ENCODE measurements at regions of chr15 and their contacts with region 1.

Region 1: DNA sequence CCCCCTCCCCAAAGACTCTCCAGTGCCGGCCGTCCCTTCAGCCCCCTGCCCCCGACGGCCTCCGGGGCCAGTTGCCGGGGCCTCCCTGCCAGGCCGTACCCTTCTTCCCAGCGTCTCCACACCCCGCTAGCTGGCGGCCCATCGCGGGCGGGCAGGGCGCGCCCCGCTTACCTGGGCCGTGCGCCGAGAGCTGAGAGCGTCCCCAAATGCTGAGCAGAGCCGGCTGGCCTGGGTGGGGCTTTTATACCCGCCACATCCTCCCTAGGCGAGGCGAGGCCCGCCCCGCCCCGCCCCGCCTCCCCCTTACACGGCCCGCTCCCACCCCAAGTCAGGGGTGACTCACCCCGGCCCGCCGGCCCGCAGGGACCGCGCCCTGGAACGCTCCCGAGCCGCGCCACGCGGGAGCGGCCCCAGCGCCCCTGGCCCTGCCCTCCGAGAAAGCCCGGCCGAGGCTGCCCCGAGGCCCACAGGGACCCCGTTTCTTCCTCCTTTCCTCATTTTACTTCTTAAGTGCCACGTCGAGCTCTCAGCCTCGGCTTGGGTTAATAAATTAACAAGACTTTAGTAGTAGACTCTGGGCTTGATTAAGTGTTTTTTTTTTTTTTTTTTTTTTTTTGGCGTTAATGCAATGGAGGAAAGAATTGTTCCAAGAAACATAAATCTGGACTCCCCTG is at the start of gene ANXA2:
- DNase-seq: peak; percentile 80
- H3K4me3 ChIP-seq: peak within 1 kb of the TSS; percentile 82 to 99 (median 96)
- H3K27ac ChIP-seq: peak within 1 kb of the TSS; percentile 97
- H3K4me1 ChIP-seq: peaks cover 61% of the 10 kb centered on the region
- H3K27me3 ChIP-seq: no peaks in the 10 kb centered on the region
- CTCF ChIP-seq: no peak
- POLR2A ChIP-seq: peak; percentile 96
- total RNA-seq, gene ANXA2: 2,636 and 2,725 TPM in 2 replicates

Region 2: DNA sequence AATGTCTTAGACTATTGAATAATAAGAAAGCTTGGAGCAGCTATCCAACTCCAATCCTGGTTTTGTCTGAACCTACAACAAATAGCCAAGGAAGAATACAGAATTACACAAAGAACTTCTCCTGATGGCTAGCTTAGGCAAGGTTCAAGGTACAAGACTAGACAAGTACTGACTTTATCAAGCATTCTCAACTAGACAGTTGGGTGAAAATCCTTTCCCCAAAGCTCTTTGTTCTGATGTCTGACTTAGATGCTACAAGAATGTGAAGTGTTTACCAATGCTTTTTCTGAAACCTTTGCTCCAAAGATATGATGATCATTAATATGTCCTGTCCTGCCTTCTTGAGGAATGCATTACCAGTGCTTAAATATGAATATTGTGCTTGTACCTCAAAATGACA is 114.0 kb before region 1 on chr15:
- CTCF ChIA-PET with region 1: no interaction called
- POLR2A ChIA-PET with region 1: no interaction called
- dilution Hi-C with region 1: no loop called
- intact Hi-C with region 1: no loop called
- DNase-seq: no peak
- H3K4me3 ChIP-seq: no peak overlapping the region
- H3K27ac ChIP-seq: no peak overlapping the region
- H3K4me1 ChIP-seq: no peaks in the 10 kb centered on the region
- H3K27me3 ChIP-seq: peaks cover 7 to 8% of the 10 kb centered on the region in 2 experiments
- CTCF ChIP-seq: no peak
- POLR2A ChIP-seq: no peak

Region 3: DNA sequence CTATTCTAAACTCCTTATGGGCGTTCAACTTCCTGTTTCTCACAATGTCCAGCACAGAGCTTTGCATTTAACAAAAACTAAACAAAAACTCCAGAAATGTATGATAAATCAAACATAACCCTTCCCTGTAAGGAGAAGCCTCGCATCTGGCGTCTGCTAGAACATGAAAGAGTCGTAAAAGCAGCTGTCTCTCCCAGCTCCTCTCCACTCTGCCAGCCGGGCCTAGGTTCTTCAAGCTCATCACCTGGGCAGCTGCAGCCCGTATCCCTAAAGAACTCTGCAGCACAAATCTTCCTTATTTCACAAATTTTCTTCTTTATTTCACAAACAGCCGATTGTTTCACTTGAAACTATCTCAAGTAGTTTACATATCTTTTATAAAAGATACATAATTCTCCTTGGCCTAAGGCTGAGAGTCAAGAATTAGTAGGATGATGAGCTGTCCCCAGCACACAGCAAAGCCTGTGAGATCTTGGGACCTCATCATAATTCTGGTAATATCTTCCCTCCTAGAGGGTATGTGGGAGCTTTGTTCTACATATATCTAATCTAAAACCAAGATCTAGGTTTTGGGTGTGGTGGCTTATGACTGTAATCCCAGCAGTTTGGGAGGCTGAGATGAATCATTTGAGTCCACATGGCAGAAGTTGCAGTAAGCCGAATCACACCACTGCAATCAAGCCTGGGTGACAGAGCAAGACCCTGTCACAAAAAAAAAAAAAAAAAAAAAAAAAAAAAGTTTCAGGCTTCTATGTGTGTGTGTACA is 35.4 kb before region 1 on chr15:
- CTCF ChIA-PET with region 1: interaction called, 14 read pairs
- POLR2A ChIA-PET with region 1: interaction called, 4 read pairs
- dilution Hi-C with region 1: no loop called
- intact Hi-C with region 1: loop called (anchors 5 kb)
- DNase-seq: no peak
- H3K4me3 ChIP-seq: no peak overlapping the region
- H3K27ac ChIP-seq: peak overlapping the region; percentile 23
- H3K4me1 ChIP-seq: peaks cover 46% of the 10 kb centered on the region
- H3K27me3 ChIP-seq: no peaks in the 10 kb centered on the region
- CTCF ChIP-seq: no peak
- POLR2A ChIP-seq: no peak

Region 4: DNA sequence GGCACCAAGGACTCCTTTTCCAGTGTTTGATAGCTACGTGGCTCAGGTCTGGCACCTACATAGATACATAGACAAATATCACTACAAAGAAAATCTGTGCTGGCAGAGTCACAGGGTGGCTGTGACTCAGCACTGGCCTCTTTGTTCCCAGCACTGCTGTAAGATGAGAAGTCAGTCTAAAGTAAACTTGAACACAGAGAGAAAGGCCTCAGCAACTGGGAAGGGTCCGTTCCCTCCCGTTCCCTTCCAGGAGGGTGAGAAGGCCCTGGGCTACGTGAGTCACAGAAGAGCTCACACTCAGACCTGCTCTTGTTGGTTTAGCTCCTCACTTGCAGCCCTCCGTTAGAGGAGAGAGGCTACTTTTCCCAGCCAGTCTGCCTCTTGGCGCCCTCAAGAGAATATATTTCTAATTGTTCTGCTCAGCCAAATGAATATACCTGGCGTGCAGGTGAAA is 23.3 kb before region 1 on chr15:
- CTCF ChIA-PET with region 1: interaction called, 17 read pairs
- POLR2A ChIA-PET with region 1: interaction called, 27 read pairs
- dilution Hi-C with region 1: no loop called
- intact Hi-C with region 1: loop called (anchors 1 kb)
- DNase-seq: peak; percentile 98
- H3K4me3 ChIP-seq: no peak overlapping the region
- H3K27ac ChIP-seq: peak overlapping the region; percentile 98
- H3K4me1 ChIP-seq: peaks cover 85% of the 10 kb centered on the region
- H3K27me3 ChIP-seq: no peaks in the 10 kb centered on the region
- CTCF ChIP-seq: no peak
- POLR2A ChIP-seq: peak; percentile 72

Region 5: GRCh38 chr15:60408438-60409105 is 10.7 kb after region 1 on chr15:
- CTCF ChIA-PET with region 1: interaction called, 8 read pairs
- POLR2A ChIA-PET with region 1: interaction called, 5 read pairs
- dilution Hi-C with region 1: no loop called
- intact Hi-C with region 1: loop called (anchors 1 kb)
- DNase-seq: peak; percentile 78
- H3K4me3 ChIP-seq: no peak overlapping the region
- H3K27ac ChIP-seq: peak overlapping the region; percentile 62
- H3K4me1 ChIP-seq: peaks cover 27% of the 10 kb centered on the region
- H3K27me3 ChIP-seq: no peaks in the 10 kb centered on the region
- CTCF ChIP-seq: no peak
- POLR2A ChIP-seq: no peak

Region 6: DNA sequence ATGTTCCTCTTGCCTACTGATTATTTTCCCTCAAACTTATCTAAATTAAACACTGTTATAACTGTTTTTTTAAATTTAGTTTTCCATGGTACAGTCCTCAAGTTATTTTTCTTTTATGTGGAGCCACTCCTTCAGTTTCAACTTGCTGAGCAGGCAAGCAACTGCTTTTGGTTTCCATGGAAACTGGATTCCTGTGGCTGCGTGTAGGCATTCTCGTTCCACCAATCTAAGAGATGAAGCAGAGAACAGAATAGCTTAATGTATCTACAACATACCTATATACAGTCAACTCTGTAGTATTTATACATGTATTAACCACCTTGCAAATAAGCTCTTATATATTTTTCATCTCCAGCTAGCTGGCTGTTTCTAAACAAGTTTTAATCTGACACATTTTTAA is 25.6 kb after region 1 on chr15:
- CTCF ChIA-PET with region 1: interaction called, 10 read pairs
- POLR2A ChIA-PET with region 1: interaction called, 5 read pairs
- dilution Hi-C with region 1: no loop called
- intact Hi-C with region 1: loop called (anchors 1 kb)
- DNase-seq: peak; percentile 64
- H3K4me3 ChIP-seq: no peak overlapping the region
- H3K27ac ChIP-seq: peak overlapping the region; percentile 32
- H3K4me1 ChIP-seq: peaks cover 45% of the 10 kb centered on the region
- H3K27me3 ChIP-seq: no peaks in the 10 kb centered on the region
- CTCF ChIP-seq: no peak
- POLR2A ChIP-seq: no peak

Region 7: DNA sequence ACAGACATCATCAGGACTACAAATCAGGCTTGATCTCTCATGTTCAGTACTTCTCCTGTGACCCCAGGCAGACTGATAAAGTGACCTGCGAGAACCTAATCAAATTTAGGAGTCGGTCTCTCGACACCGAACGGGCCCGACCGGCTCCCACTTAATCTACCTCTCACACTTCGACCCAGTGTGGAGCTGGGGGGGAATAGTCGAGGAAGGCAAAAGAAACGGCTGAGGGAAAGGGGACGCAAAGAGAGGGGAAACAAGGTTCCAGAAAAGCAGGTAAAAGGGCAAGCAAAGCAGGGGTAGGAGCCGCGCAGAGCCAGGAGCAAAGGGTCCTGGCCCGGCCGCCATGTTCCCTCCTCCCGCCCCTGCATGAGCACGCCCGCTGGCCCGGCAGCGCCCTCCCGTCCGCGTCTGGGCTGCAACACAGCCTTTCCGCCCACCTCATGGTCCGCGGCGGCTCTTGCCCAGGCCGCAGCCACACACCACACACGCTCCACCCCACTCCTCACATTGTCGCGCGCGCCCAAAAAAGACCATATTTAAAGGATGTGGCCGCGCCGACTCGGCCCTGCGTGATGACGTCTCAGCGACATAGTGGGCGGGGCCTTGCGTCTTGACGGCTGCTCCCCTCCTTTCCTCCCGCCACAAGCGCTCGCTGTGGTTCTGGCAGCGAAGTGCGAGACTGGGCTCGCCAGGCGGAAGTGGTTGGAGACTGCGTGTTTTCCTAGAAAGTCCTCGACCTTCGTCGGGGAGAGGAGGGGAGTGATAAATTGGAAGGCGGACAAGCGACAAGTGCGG is 80.9 kb after region 1 on chr15 and contains the start of gene ICE2:
- CTCF ChIA-PET with region 1: no interaction called
- POLR2A ChIA-PET with region 1: interaction called, 3 read pairs
- dilution Hi-C with region 1: no loop called
- intact Hi-C with region 1: loop called (anchors 1 kb)
- DNase-seq: peak; percentile 97
- H3K4me3 ChIP-seq: peak within 1 kb of the TSS; percentile 69 to 94 (median 77)
- H3K27ac ChIP-seq: peak within 1 kb of the TSS; percentile 89
- H3K4me1 ChIP-seq: peaks cover 26% of the 10 kb centered on the region
- H3K27me3 ChIP-seq: no peaks in the 10 kb centered on the region
- CTCF ChIP-seq: no peak
- POLR2A ChIP-seq: peak; percentile 98
- total RNA-seq, gene ICE2: 50.9 and 57.0 TPM in 2 replicates